Ascending aorta (tissue), 2 donors: ENCODE measurements at regions of chr6 and their contacts with region 1.

Region 1: DNA sequence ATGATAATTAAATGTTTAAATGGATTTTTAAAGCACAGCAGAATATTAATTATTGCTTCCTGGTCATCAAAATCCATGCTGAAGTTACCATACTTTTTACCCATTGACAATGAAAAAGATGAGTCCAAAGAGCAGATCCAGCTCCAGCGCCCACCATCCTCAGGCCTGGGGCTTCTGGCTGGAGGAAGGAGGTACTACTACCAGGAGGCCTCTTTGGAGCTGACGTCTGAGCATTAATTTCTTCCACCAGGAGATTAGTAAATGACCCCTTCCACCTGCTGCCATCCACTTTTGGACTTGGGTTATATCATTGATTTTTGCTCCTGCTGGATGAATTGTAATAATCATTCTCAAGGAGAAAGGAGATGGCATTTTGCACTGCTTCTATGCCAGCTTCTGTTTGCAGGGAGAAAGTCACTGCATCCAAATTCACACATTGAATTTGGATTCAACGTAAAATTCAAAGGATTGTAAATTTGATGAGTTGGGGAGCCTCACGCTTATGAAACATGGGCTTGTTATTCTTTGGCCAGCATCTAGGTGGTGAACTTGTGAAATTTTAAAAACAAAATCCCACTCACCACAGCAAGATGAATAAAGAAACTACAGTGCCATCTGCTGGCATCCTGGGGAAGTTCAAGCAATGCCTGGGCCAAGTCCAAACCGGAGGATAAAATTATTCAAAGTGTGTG is 121.8 kb downstream of the SASH1 start:
- DNase-seq: peak in 1 of 2 donors; percentile 87
- H3K4me3 ChIP-seq: no peak overlapping the region
- H3K27ac ChIP-seq: peak overlapping the region in 1 of 2 donors; percentile 38
- H3K4me1 ChIP-seq: peaks cover 14 to 24% of the 10 kb centered on the region in 2 donors
- H3K27me3 ChIP-seq: no peaks in the 10 kb centered on the region
- CTCF ChIP-seq: peak; percentile 78 to 96 (median 92)

Region 2: DNA sequence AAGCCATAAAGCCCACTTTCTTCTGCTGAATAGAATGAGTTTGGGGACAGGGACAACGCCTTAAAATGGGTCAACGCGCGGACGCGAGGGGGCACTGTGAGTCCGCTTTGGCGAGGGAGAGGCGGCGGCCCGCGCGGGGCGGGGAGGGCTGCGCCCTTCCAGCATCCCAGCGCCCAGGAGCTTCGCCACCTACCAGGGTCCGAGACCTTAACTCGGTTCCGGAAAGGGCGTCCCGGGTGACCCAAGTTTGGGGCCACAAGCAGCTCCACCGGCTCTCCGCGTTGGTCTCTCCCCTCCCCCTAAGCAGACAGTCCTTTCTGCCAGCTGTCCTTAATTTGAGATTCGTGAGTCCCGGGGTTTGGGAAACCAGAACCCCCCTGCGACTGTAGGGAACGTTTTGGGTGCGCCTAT is 957.8 kb before region 1 on chr6:
- intact Hi-C with region 1: loop called (anchors 5 kb)
- DNase-seq: peak in 1 of 2 donors; percentile 75
- H3K4me3 ChIP-seq: peak overlapping the region; percentile 58 to 80
- H3K27ac ChIP-seq: no peak overlapping the region
- H3K4me1 ChIP-seq: peaks cover 0 to 11% of the 10 kb centered on the region in 2 donors
- H3K27me3 ChIP-seq: no peaks in the 10 kb centered on the region
- CTCF ChIP-seq: peak; percentile 57 to 84 (median 75)

Region 3: DNA sequence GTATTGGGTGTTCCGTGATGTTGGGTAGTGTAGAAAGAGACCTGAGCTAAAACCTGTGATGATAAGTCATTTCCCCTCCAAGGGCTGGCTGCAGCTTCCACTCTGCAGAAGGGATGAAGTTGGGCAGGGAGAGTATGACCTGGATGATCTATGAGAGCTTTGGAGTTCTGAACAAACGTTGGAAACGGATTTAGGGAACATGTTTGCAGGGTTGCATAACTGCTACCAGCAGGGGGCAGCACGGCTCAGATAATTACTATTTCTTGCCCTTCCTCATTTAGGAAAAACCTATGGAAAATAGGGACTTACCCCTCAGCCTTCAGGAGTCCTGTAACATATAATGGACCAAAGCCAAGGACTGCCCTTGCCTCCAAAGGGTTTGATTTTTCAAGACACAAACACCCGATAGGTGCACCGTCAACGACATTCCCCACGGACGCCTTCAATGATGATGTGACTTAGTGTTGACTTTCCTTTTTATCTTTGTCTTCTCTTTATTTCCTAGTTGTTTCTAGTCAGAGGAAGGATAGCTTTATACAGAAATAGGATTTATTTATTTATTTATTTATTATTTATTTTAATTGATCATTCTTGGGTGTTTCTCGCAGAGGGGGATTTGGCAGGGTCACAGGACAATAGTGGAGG is 286.8 kb before region 1 on chr6:
- intact Hi-C with region 1: loop called (anchors 1 kb)
- DNase-seq: peak in 1 of 2 donors; percentile 81
- H3K4me3 ChIP-seq: no peak overlapping the region
- H3K27ac ChIP-seq: no peak overlapping the region
- H3K4me1 ChIP-seq: no peaks in the 10 kb centered on the region
- H3K27me3 ChIP-seq: no peaks in the 10 kb centered on the region
- CTCF ChIP-seq: peak; percentile 77 to 85 (median 82)

Region 4: DNA sequence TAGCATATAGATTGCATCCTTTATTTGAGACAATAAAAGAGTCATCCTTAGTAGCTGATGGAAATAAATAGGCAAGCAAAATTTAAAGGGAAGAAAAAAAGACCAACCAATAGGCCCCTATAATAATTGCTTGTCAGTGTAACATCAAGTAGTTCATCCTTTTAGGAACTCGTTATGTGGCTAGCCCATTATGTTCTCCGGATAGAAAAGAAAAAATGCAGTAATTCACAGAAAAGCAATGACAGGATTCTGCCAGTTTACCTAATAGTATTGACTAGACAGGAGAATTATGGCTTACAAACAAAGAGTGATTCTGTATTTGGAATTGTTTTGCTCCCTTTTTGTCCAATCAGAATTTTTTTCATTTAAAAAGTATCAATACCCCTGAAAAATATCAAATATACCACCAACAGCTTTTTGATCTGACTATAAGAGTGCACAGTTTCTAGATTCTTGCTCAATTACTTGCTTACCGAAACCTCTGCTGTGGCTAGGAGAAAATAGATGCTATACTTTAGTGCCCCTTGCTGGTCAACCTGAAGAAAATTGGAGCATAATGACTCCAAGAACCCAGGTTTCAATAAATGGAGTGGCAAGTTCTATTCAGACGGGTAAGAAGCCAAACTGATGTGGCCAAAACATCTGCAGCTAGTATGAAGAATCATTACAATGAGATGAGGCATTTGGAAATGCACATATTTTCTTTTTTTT is 213.3 kb before region 1 on chr6:
- intact Hi-C with region 1: loop called (anchors 2 kb)
- DNase-seq: no peak
- H3K4me3 ChIP-seq: no peak overlapping the region
- H3K27ac ChIP-seq: no peak overlapping the region
- H3K4me1 ChIP-seq: peaks cover 0 to 13% of the 10 kb centered on the region in 2 donors
- H3K27me3 ChIP-seq: no peaks in the 10 kb centered on the region
- CTCF ChIP-seq: peak in 2 of 3 experiments; percentile 44 to 67

Region 5: GRCh38 chr6:148263010-148263409 is 201.5 kb before region 1 on chr6:
- intact Hi-C with region 1: no loop called
- DNase-seq: no peak
- H3K4me3 ChIP-seq: no peak overlapping the region
- H3K27ac ChIP-seq: no peak overlapping the region
- H3K4me1 ChIP-seq: peaks cover 0 to 2% of the 10 kb centered on the region in 2 donors
- H3K27me3 ChIP-seq: no peaks in the 10 kb centered on the region
- CTCF ChIP-seq: no peak

Region 6: GRCh38 chr6:148524976-148525375 is 60.5 kb after region 1 on chr6:
- intact Hi-C with region 1: loop called (anchors 2 kb)
- DNase-seq: peak in 1 of 2 donors; percentile 77
- H3K4me3 ChIP-seq: peak overlapping the region; percentile 24 to 57
- H3K27ac ChIP-seq: peak overlapping the region; percentile 82 to 85
- H3K4me1 ChIP-seq: peaks cover 0 to 44% of the 10 kb centered on the region in 2 donors
- H3K27me3 ChIP-seq: no peaks in the 10 kb centered on the region
- CTCF ChIP-seq: no peak

Region 7: GRCh38 chr6:148658701-148659100 is 194.2 kb after region 1 on chr6:
- intact Hi-C with region 1: no loop called
- DNase-seq: no peak
- H3K4me3 ChIP-seq: no peak overlapping the region
- H3K27ac ChIP-seq: peak overlapping the region; percentile 56 to 83
- H3K4me1 ChIP-seq: peaks cover 0 to 8% of the 10 kb centered on the region in 2 donors
- H3K27me3 ChIP-seq: no peaks in the 10 kb centered on the region
- CTCF ChIP-seq: no peak